Common myeloid progenitor, CD34-positive (primary cell): ENCODE measurements at regions of chr17 and their contacts with region 1.

Region 1: GRCh38 chr17:47889734-47890529 is 6.1 kb upstream of the SP2 start:
- DNase-seq: peak; percentile 79 to 90 (median 87)
- H3K4me3 ChIP-seq: no peak overlapping the region
- H3K27ac ChIP-seq: no peak overlapping the region
- H3K4me1 ChIP-seq: peaks cover 4 to 15% (median 7%) of the 10 kb centered on the region in 4 experiments
- H3K27me3 ChIP-seq: no peaks in the 10 kb centered on the region

Region 2: GRCh38 chr17:47763913-47764582 is 125.9 kb before region 1 on chr17:
- CTCF ChIA-PET with region 1: no interaction called
- POLR2A ChIA-PET with region 1: no interaction called
- DNase-seq: no peak
- H3K4me3 ChIP-seq: no peak overlapping the region
- H3K27ac ChIP-seq: no peak overlapping the region
- H3K4me1 ChIP-seq: no peaks in the 10 kb centered on the region
- H3K27me3 ChIP-seq: peaks cover 0 to 2% (median 0%) of the 10 kb centered on the region in 5 experiments

Region 3: GRCh38 chr17:47857551-47858446 is 32.1 kb before region 1 on chr17:
- CTCF ChIA-PET with region 1: interaction called, 575 read pairs
- POLR2A ChIA-PET with region 1: no interaction called
- DNase-seq: no peak
- H3K4me3 ChIP-seq: no peak overlapping the region
- H3K27ac ChIP-seq: no peak overlapping the region
- H3K4me1 ChIP-seq: peaks cover 0 to 9% (median 6%) of the 10 kb centered on the region in 4 experiments
- H3K27me3 ChIP-seq: peaks cover 0 to 32% (median 23%) of the 10 kb centered on the region in 5 experiments